ENCODE measurements at regions of chr6 and their contacts with region 1.

Region 1: GRCh38 chr6:64732888-64733287 is 974.1 kb downstream of the EYS start:
- DNase-seq: peak; percentile 8
- H3K4me3 ChIP-seq: no peak overlapping the region
- H3K27ac ChIP-seq: no peak overlapping the region
- H3K4me1 ChIP-seq: no peaks in the 10 kb centered on the region
- H3K27me3 ChIP-seq: no peaks in the 10 kb centered on the region
- CTCF ChIP-seq: peak; percentile 24 to 44

Region 2: DNA sequence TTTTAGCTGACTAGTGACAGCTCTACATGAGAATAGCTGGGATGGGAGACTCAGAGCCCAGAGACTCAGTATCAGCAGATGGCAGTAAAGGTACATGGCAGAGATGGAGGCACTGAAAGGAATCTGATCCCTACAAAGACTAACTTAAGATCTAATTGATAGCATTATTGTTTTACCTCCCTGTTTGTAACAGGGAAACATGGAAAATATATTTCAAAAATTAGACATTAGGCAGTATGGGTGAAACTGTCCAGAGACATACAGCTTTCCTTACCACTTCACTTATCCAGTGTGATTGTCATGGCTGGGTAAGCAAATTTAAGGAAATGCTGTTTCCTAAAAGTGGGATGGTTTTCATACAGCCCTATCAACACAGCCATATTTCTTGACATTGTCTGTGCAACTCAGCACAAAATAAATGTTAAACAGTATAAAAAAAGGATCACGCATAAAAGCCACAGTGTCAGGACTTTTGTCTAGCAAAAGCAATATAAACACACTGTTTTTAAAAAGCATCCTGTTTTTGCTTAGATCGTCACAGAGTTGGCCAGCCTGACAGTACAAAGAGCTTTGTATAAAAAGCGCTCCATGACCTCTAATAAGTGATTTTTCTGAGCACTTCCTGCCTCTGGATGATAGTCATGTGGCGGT is 720.4 kb before region 1 on chr6:
- CTCF ChIA-PET with region 1: no interaction called
- dilution Hi-C with region 1: no loop called
- in situ Hi-C with region 1: no loop called
- intact Hi-C with region 1: loop called (anchors 1 kb)
- DNase-seq: peak; percentile 6
- H3K4me3 ChIP-seq: no peak overlapping the region
- H3K27ac ChIP-seq: no peak overlapping the region
- H3K4me1 ChIP-seq: no peaks in the 10 kb centered on the region
- H3K27me3 ChIP-seq: peaks cover 3% of the 10 kb centered on the region
- CTCF ChIP-seq: peak; percentile 65 to 96

Region 3: DNA sequence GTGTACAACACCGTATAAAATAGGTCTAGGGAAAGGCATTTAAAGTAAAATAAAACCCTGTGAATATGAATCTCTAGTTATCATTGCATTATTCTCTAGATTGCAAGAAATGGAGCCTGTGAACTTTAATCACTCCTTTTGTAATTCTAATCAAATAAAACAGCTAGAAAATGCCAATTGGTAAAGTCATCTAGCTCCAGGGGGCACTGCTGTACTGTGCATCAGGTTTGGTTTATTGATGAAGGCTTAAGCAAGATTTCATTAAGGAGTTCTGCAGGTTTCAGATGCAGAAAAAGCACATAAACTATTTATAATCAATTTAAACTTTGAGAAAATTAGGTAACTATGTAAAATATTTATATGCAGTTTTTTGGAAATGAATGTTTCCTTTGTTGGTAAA is 452.3 kb before region 1 on chr6:
- CTCF ChIA-PET with region 1: no interaction called
- dilution Hi-C with region 1: no loop called
- in situ Hi-C with region 1: no loop called
- intact Hi-C with region 1: loop called (anchors 2 kb)
- DNase-seq: no peak
- H3K4me3 ChIP-seq: no peak overlapping the region
- H3K27ac ChIP-seq: no peak overlapping the region
- H3K4me1 ChIP-seq: no peaks in the 10 kb centered on the region
- H3K27me3 ChIP-seq: no peaks in the 10 kb centered on the region
- CTCF ChIP-seq: peak; percentile 25 to 37

Measured in mammary epithelial cell (primary cell).